Heart right ventricle (tissue), 16 donors: ENCODE measurements at regions of chr17 and their contacts with region 1.

Region 1: DNA sequence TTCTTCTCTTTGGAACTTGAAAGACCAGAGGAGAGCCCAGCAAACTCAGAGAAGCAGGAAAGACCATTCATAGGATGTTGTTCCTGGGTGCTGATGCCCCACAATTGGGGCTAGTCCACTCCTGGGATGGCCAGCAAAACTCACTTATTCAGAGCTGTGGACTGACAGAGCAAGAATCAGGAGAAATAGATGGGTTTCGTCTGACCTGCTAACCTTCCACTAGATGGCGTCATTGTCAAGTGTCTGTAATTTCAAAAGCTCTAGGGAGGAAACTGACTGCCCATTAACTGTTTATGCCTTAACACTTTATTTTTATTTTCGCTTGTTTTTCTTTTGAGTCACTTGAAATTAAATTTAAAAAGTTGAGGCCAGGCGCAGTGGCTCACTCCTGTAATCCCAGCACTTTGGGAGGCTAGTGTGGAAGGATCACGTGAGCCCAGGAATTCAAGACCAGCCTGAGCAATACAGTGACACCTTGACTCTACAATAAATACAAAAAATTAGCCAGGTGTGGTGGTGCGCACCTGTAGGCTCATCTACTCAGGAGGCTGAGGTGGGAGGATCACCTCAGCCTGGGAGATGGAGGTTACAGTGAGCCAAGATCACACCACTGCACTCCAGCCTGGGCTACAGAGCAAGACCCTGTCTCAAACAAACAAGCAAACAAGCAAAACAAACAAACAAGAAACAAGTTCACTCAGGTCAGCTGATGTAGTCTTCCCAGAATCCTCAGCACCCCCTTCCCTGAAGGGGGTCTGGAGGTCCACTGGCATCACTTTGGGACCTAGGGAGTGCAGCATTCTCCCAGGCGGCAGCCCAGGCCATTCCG is 28.6 kb upstream of the MILR1 start:
- DNase-seq: peak in 1 of 2 donors; percentile 51
- ATAC-seq: peak; percentile 77 to 89 (median 81)
- H3K4me3 ChIP-seq: no peak overlapping the region
- H3K27ac ChIP-seq: no peak overlapping the region
- H3K4me1 ChIP-seq: peaks cover 0 to 25% (median 4%) of the 10 kb centered on the region in 9 donors
- H3K27me3 ChIP-seq: no peaks in the 10 kb centered on the region
- CTCF ChIP-seq: peak; percentile 72 to 83 (median 81)

Region 2: DNA sequence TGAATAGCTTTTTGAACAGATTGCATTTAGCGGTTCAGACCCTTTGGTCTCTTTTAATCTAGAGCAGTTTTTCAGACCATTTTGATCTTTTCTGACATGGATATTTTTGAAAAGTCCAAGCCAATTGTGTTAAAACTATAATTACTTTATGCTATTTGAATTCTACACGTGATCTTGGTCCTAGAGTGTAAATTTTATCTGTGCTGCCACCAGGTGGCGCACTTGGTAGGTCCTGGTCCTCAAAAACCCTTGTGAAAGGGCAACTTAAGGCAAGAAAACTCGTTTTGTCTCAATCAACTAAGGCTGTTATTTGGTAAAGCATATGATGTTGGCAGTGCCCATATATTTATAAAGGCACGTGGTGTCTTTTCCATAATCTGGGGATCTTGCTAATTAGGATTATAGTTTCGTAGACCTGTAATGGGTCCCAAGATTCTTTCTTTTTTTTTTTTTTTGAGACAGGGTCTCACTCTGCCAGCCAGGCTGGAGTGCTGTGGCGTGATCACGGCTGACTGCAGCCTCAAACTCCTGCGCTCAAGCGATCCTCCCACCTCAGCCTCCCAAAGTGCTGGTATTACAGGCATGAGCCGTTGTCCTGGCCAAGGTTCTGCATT is 113.4 kb before region 1 on chr17:
- intact Hi-C with region 1: loop called in 6 of 10 experiments (anchors 1 to 2 kb)
- DNase-seq: peak; percentile 62 to 66
- ATAC-seq: peak in 5 of 8 donors; percentile 59 to 66 (median 65)
- H3K4me3 ChIP-seq: no peak overlapping the region
- H3K27ac ChIP-seq: no peak overlapping the region
- H3K4me1 ChIP-seq: peaks cover 0 to 28% (median 8%) of the 10 kb centered on the region in 9 donors
- H3K27me3 ChIP-seq: no peaks in the 10 kb centered on the region
- CTCF ChIP-seq: peak; percentile 82 to 90 (median 88)

Region 3: GRCh38 chr17:64320613-64321553 is 99.5 kb before region 1 on chr17:
- intact Hi-C with region 1: loop called in 9 of 10 experiments (anchors 1 to 5 kb)
- DNase-seq: peak in 1 of 2 donors; percentile 76
- ATAC-seq: peak; percentile 57 to 83 (median 78)
- H3K4me3 ChIP-seq: peak overlapping the region in 2 of 10 donors; percentile 10
- H3K27ac ChIP-seq: peak overlapping the region in 8 of 10 donors; percentile 10 to 76 (median 46)
- H3K4me1 ChIP-seq: peaks cover under 1 to 65% (median 32%) of the 10 kb centered on the region in 9 donors
- H3K27me3 ChIP-seq: no peaks in the 10 kb centered on the region
- CTCF ChIP-seq: peak; percentile 61 to 86 (median 78)

Region 4: GRCh38 chr17:64357191-64357981 is 63.0 kb before region 1 on chr17:
- intact Hi-C with region 1: no loop called
- DNase-seq: peak; percentile 58 to 66
- ATAC-seq: peak; percentile 83 to 93 (median 90)
- H3K4me3 ChIP-seq: no peak overlapping the region
- H3K27ac ChIP-seq: peak overlapping the region; percentile 40 to 85 (median 77)
- H3K4me1 ChIP-seq: peaks cover 15 to 83% (median 67%) of the 10 kb centered on the region in 9 donors
- H3K27me3 ChIP-seq: no peaks in the 10 kb centered on the region
- CTCF ChIP-seq: no peak

Region 5: GRCh38 chr17:64491034-64491859 is 70.9 kb after region 1 on chr17:
- intact Hi-C with region 1: loop called in 9 of 10 experiments (anchors 2 to 5 kb)
- DNase-seq: peak in 1 of 2 donors; percentile 32
- ATAC-seq: peak in 3 of 8 donors; percentile 54 to 58 (median 55)
- H3K4me3 ChIP-seq: no peak overlapping the region
- H3K27ac ChIP-seq: no peak overlapping the region
- H3K4me1 ChIP-seq: peaks cover 0 to 29% (median 25%) of the 10 kb centered on the region in 9 donors
- H3K27me3 ChIP-seq: no peaks in the 10 kb centered on the region
- CTCF ChIP-seq: peak in 8 of 9 donors; percentile 17 to 75 (median 53)

Region 6: DNA sequence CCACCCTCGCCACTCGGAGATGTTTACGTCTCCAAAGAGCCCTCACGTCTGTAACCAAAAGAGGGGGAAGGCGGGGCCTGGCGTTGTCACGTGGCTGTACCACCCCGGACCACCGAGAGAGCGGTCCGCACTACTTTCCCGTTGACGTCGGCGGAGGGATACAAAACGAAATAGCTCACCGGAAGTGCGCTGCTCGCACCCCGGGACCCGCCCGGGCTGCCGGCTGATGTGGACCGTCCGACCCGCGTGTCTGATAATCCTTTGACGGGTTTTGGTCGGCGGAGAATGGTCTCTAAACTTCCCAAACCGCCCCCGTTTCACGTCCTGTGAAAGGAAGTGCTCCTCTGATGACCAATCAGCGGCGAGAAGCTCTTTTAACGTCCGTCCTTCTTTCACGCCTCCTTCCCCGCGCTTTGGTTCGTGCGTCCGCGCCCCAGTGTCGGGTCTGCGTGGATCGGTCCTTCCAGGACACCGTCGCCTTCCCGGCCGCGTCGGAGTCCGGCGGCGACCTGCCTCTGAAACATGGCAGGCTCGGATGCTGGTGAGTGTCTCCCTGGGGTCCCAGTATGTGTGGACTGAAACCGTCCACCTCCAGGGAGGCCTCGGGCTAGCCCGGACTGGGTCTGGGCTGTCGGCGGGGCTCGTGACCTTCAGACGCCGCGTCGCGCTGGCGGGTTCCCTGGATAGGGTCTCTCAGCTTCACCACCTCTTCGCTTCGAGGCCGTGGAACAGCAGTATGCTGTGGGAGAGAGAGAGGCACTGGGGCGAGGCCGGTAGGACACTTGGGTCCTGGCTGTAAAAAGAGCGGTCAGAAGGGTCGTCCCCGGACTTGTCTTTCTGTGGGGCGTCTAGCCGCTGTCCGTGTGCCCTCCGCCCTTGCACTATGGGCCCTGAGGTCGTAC is 86.5 kb after region 1 on chr17 and contains the start of gene CEP95:
- intact Hi-C with region 1: loop called in 2 of 10 experiments (anchors 5 kb)
- DNase-seq: peak; percentile 93 to 97
- ATAC-seq: peak; percentile 76 to 89 (median 86)
- H3K4me3 ChIP-seq: peak within 1 kb of the TSS; percentile 72 to 99 (median 91)
- H3K27ac ChIP-seq: peak within 1 kb of the TSS; percentile 86 to 100 (median 99)
- H3K4me1 ChIP-seq: peaks cover 6 to 61% (median 51%) of the 10 kb centered on the region in 9 donors
- H3K27me3 ChIP-seq: no peaks in the 10 kb centered on the region
- CTCF ChIP-seq: no peak
- total RNA-seq, gene CEP95: 8.6 to 19.7 (median 14.6) TPM

Region 7: GRCh38 chr17:64648234-64648633 is 227.9 kb after region 1 on chr17:
- intact Hi-C with region 1: loop called in 7 of 10 experiments (anchors 2 to 10 kb)
- DNase-seq: no peak
- ATAC-seq: no peak
- H3K4me3 ChIP-seq: no peak overlapping the region
- H3K27ac ChIP-seq: no peak overlapping the region
- H3K4me1 ChIP-seq: peaks cover 0 to 26% (median 9%) of the 10 kb centered on the region in 9 donors
- H3K27me3 ChIP-seq: no peaks in the 10 kb centered on the region
- CTCF ChIP-seq: no peak

Region 8: DNA sequence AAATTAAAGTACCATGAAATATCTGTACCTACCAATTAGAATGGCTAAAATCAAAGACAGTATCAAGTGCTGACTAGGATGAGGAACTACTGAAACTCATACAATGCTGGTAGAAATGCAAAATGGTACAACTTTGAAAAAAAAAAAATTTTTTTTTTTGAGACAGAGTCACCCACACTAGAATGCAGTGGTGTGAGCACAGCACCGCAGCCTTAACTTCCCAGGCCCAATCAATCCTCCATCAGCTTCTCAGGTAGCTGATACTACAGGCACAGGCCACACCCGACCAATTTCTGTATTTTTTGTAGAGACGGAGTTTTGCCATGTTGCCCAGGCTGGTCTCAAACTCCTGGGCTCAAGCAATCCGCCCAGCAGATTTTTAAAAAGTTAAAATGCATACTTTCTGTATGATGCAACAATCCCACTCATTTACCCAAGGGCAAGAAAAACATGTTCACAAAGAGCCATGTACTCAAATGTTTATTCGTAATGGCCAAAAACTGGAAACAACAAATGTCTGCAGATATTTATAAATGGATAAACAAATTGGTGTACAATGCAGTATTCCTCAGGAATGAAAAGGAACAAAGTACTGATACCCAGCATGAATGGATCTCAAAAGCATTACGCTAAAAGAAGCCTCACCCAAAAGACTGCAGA is 233.1 kb after region 1 on chr17:
- intact Hi-C with region 1: loop called in 7 of 10 experiments (anchors 2 to 10 kb)
- DNase-seq: no peak
- ATAC-seq: no peak
- H3K4me3 ChIP-seq: no peak overlapping the region
- H3K27ac ChIP-seq: no peak overlapping the region
- H3K4me1 ChIP-seq: peaks cover 0 to 47% (median 15%) of the 10 kb centered on the region in 9 donors
- H3K27me3 ChIP-seq: no peaks in the 10 kb centered on the region
- CTCF ChIP-seq: no peak